ENCODE measurements at regions of chr7 and their contacts with region 1.

Region 1: GRCh38 chr7:100586266-100587025 is at the start of gene FBXO24:
- DNase-seq: peak; percentile 99 to 100 (median 100)
- H3K4me3 ChIP-seq: peak within 1 kb of the TSS; percentile 77 to 98
- H3K4me3 Mint-ChIP-seq: peak within 1 kb of the TSS; percentile 92 to 99 (median 97)
- H3K27ac ChIP-seq: peak within 1 kb of the TSS; percentile 79
- H3K27ac Mint-ChIP-seq: peak within 1 kb of the TSS; percentile 86 to 99 (median 97)
- H3K4me1 ChIP-seq: peaks cover 38% of the 10 kb centered on the region
- H3K4me1 Mint-ChIP-seq: peaks cover 11 to 27% (median 16%) of the 10 kb centered on the region in 4 donors
- H3K27me3 ChIP-seq: no peaks in the 10 kb centered on the region
- H3K27me3 Mint-ChIP-seq: peaks cover 0 to 2% of the 10 kb centered on the region in 2 donors
- total RNA-seq, gene FBXO24: 1.6 to 2.1 TPM

Region 2: DNA sequence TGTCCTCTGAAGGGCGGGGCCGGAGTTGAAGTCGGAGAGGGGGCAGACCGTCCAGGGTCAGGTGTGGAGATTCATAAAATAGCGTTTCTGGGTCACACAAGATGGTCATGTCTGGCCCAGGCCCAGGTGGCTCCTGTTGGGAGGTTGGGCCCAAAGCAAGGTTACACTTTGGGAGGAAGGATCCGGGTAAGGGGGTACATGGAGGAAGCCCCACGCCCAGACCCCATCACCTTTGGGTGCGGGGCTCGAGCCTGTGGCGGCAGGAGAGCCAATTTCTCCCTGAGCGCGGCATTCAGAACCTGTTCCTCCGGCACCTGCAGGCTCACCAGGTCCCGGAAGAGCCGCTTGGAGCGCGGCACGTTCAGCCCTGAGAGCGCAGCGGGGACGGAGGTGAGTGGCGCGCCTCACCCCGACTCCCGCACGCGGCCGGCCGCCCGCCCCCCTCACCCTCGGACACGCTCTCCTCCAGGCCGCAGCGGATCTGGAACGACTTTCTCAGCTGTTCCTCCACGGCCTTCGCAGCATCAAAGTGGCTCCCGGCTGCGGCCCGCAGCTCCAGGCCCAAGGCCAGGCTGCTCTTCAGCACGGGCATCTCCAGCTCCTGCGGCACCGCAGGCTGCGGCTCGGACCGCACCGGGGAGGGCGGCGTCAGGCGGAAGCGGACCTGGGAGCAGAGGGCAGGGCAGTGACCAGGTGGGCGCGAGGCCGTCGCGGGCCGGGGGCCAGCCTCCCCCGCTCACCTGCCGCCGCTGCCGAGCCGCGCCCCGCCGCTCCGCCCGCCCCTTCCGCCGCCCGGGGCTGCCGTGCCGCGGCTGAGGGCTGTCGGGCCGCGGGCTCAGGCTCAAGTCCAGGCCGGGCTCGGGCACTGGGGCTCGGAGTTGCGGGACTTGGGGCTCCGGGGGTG is 150.8 kb before region 1 on chr7:
- CTCF ChIA-PET with region 1: interaction called, 4 read pairs
- POLR2A ChIA-PET with region 1: interaction called, 80 read pairs
- intact Hi-C with region 1: no loop called
- DNase-seq: peak; percentile 46 to 58 (median 53)
- H3K4me3 ChIP-seq: peak overlapping the region; percentile 78 to 95
- H3K4me3 Mint-ChIP-seq: peak overlapping the region; percentile 85 to 95 (median 92)
- H3K27ac ChIP-seq: peak overlapping the region; percentile 92
- H3K27ac Mint-ChIP-seq: peak overlapping the region; percentile 81 to 99 (median 94)
- H3K4me1 ChIP-seq: peaks cover 49% of the 10 kb centered on the region
- H3K4me1 Mint-ChIP-seq: peaks cover 24 to 55% (median 40%) of the 10 kb centered on the region in 4 donors
- H3K27me3 ChIP-seq: no peaks in the 10 kb centered on the region
- H3K27me3 Mint-ChIP-seq: no peaks in the 10 kb centered on the region

Region 3: GRCh38 chr7:100538654-100539435 is 47.6 kb before region 1 on chr7 and contains the start of gene AGFG2:
- CTCF ChIA-PET with region 1: interaction called, 4 read pairs
- POLR2A ChIA-PET with region 1: interaction called, 104 read pairs
- intact Hi-C with region 1: loop called (anchors 1 kb)
- DNase-seq: peak; percentile 100
- H3K4me3 ChIP-seq: peak within 1 kb of the TSS; percentile 33 to 79
- H3K4me3 Mint-ChIP-seq: peak within 1 kb of the TSS; percentile 88 to 99 (median 97)
- H3K27ac ChIP-seq: peak within 1 kb of the TSS; percentile 49
- H3K27ac Mint-ChIP-seq: peak within 1 kb of the TSS; percentile 84 to 95 (median 91)
- H3K4me1 ChIP-seq: peaks cover 42% of the 10 kb centered on the region
- H3K4me1 Mint-ChIP-seq: peaks cover 33 to 49% (median 41%) of the 10 kb centered on the region in 4 donors
- H3K27me3 ChIP-seq: no peaks in the 10 kb centered on the region
- H3K27me3 Mint-ChIP-seq: no peaks in the 10 kb centered on the region
- total RNA-seq, gene AGFG2: 56.6 to 58.3 TPM

Region 4: DNA sequence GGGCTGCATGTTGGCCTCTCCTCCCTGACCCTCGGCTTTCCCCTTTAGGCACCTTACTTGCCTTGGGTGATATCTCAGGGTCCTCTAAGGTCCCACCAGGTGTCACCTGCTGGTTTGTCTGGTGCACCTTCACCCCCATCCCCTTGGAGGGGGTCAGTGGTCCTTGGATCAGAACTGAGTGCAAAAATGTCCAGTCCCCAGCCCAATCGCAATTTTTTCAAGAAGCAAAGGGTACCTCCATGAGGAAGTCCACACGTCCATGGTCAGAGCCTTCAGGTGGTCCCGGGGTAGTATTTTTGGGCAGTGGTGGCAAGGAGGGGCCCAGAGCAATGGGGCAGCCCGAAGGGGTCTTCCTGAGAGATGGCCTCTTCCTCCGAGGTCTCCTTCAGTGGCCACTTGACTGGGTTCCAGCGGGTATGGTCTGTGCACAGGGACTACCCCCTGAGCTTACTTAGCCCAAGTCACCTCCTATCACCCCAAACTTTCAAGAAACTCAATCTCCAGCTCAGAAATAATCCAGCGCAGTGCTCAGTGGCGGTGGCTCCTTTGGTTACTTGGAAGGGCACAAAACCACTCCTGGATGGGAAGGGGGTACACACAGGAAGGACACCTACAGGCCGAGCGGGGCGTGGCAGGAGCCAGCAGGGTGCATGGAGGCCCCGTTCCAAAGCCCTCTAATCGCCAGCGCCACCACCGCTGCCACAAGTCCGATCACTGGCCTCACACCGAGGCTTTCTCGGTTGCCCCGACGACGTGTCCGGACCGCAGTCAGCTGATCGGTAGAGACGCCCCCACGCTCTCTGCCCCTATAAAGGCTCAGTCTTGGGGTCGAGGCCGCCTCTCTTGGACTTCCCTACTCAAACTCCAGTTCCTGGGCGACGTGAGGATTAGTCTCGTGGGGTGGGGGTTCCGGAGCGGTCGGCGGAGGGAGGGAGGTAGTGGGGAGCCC is 17.3 kb before region 1 on chr7:
- CTCF ChIA-PET with region 1: interaction called, 266 read pairs
- POLR2A ChIA-PET with region 1: interaction called, 307 read pairs
- intact Hi-C with region 1: loop called (anchors 1 kb)
- DNase-seq: peak; percentile 43 to 70 (median 46)
- H3K4me3 ChIP-seq: peak overlapping the region in 1 of 2 donors; percentile 47
- H3K4me3 Mint-ChIP-seq: peak overlapping the region; percentile 31 to 77 (median 68)
- H3K27ac ChIP-seq: peak overlapping the region; percentile 48
- H3K27ac Mint-ChIP-seq: peak overlapping the region; percentile 32 to 93 (median 83)
- H3K4me1 ChIP-seq: peaks cover 40% of the 10 kb centered on the region
- H3K4me1 Mint-ChIP-seq: peaks cover 14 to 52% (median 27%) of the 10 kb centered on the region in 4 donors
- H3K27me3 ChIP-seq: no peaks in the 10 kb centered on the region
- H3K27me3 Mint-ChIP-seq: no peaks in the 10 kb centered on the region

Region 5: DNA sequence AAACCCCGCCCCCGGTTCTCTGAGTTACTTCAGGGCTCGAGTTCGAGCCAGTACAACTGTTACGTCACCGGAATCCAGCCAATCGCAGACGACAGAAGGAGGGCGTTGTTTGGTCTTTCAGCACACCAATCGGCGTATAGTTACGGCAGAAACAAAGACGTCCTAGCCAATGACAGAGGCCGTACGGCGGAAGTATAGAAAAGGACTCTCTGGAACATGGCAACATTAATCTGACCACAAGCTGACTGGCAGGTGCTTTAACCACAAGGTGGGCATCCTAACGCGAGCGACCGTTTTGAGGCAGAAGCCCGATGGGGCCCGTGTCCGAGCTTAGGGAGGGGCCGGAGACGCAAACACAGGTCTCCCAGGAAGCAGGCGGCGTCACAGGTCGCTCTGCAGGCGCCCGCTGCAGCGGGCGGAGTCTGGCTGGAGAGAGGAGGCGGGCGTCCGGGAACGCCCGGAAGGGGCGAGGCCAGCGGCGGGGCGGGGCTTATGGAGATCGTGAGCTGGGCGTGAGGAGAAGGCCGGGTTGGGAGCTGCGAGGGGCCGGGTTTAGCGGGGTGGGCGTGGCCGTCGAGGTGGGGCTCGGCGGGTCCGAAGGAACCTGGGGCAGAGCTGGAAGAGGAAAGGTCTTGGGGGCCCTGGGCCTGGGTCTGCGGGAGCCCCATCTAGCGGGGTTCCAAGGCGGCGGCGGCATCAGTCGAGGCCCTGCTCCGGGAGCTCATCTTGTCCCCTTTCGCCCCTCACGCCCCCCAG is 25.7 kb after region 1 on chr7 and contains the start of gene MOSPD3:
- CTCF ChIA-PET with region 1: interaction called, 31 read pairs
- POLR2A ChIA-PET with region 1: interaction called, 177 read pairs
- intact Hi-C with region 1: loop called (anchors 1 kb)
- DNase-seq: peak; percentile 98 to 99 (median 98)
- H3K4me3 ChIP-seq: peak within 1 kb of the TSS; percentile 74 to 96
- H3K4me3 Mint-ChIP-seq: peak within 1 kb of the TSS; percentile 96 to 100 (median 98)
- H3K27ac ChIP-seq: peak within 1 kb of the TSS; percentile 85
- H3K27ac Mint-ChIP-seq: peak within 1 kb of the TSS; percentile 96 to 100 (median 100)
- H3K4me1 ChIP-seq: peaks cover 18% of the 10 kb centered on the region
- H3K4me1 Mint-ChIP-seq: peaks cover 14 to 32% (median 24%) of the 10 kb centered on the region in 4 donors
- H3K27me3 ChIP-seq: no peaks in the 10 kb centered on the region
- H3K27me3 Mint-ChIP-seq: no peaks in the 10 kb centered on the region
- total RNA-seq, gene MOSPD3: 13.4 to 15.6 TPM

Region 6: DNA sequence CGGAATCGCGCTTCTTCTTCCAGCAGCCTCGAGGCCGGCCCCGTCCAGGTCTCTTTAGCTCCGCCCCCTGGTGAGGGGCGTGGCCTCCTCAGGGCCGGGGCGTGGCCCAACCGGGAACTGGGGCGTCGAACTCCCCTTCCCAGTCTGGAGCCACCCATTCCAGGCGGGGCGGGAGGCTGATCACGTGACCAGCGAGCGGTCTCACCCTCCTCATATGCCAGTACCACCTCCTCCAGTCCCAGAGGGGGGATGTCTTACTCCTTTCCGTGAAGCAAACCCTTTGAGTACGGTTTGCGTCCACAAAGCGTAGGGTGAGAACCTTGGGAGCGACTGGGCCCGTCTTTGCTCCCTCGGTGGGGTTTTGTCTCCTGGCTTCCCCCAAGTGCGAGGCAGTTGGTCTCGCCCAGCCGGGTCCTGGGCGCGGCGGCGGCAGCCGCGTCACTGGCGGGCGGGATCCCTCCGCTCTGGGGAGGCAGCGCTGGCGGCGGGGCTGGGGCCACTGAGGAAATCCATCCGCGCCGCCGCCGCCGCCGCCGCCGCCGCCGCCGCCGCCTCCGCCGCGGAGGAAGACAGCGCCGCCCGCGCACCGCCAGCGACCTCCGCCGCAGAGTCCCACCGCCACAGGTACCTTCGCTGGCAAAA is 87.0 kb after region 1 on chr7 and contains the start of gene GNB2:
- CTCF ChIA-PET with region 1: interaction called, 4 read pairs
- POLR2A ChIA-PET with region 1: interaction called, 125 read pairs
- intact Hi-C with region 1: loop called (anchors 1 kb)
- DNase-seq: peak; percentile 97 to 98 (median 97)
- H3K4me3 ChIP-seq: peak within 1 kb of the TSS; percentile 80 to 91
- H3K4me3 Mint-ChIP-seq: peak within 1 kb of the TSS; percentile 94 to 99 (median 96)
- H3K27ac ChIP-seq: peak within 1 kb of the TSS; percentile 92
- H3K27ac Mint-ChIP-seq: peak within 1 kb of the TSS; percentile 96 to 99 (median 97)
- H3K4me1 ChIP-seq: peaks cover 30% of the 10 kb centered on the region
- H3K4me1 Mint-ChIP-seq: peaks cover 3 to 33% (median 14%) of the 10 kb centered on the region in 4 donors
- H3K27me3 ChIP-seq: no peaks in the 10 kb centered on the region
- H3K27me3 Mint-ChIP-seq: peaks cover 0 to 1% of the 10 kb centered on the region in 2 donors
- total RNA-seq, gene GNB2: 138 to 144 TPM

Region 7: GRCh38 chr7:101265622-101266516 is 679.4 kb after region 1 on chr7:
- CTCF ChIA-PET with region 1: no interaction called
- POLR2A ChIA-PET with region 1: no interaction called
- intact Hi-C with region 1: no loop called
- DNase-seq: no peak
- H3K4me3 ChIP-seq: no peak overlapping the region
- H3K4me3 Mint-ChIP-seq: no peak overlapping the region
- H3K27ac ChIP-seq: no peak overlapping the region
- H3K27ac Mint-ChIP-seq: no peak overlapping the region
- H3K4me1 ChIP-seq: no peaks in the 10 kb centered on the region
- H3K4me1 Mint-ChIP-seq: peaks cover 0 to 1% (median 0%) of the 10 kb centered on the region in 4 donors
- H3K27me3 ChIP-seq: no peaks in the 10 kb centered on the region
- H3K27me3 Mint-ChIP-seq: peaks cover 7% of the 10 kb centered on the region in 2 donors